Common myeloid progenitor, CD34-positive (primary cell): ENCODE measurements at regions of chr6 and their contacts with region 1.

Region 1: GRCh38 chr6:31087494-31088089 is 24.8 kb downstream of the C6orf15 start:
- DNase-seq: peak; percentile 87 to 91 (median 90)
- H3K4me3 ChIP-seq: peak overlapping the region in 1 of 7 experiments; percentile 26
- H3K27ac ChIP-seq: peak overlapping the region in 1 of 2 experiments; percentile 28
- H3K4me1 ChIP-seq: peaks cover 0 to 21% (median 14%) of the 10 kb centered on the region in 4 experiments
- H3K27me3 ChIP-seq: no peaks in the 10 kb centered on the region

Region 2: GRCh38 chr6:30821862-30822782 is 265.5 kb before region 1 on chr6:
- CTCF ChIA-PET with region 1: interaction called, 33 read pairs
- POLR2A ChIA-PET with region 1: no interaction called
- DNase-seq: peak; percentile 46 to 72 (median 61)
- H3K4me3 ChIP-seq: no peak overlapping the region
- H3K27ac ChIP-seq: no peak overlapping the region
- H3K4me1 ChIP-seq: no peaks in the 10 kb centered on the region
- H3K27me3 ChIP-seq: peaks cover 0 to 5% (median 0%) of the 10 kb centered on the region in 5 experiments

Region 3: GRCh38 chr6:30883685-30884520 is 203.7 kb before region 1 on chr6 and contains the start of gene DDR1:
- CTCF ChIA-PET with region 1: interaction called, 13 read pairs
- POLR2A ChIA-PET with region 1: no interaction called
- DNase-seq: peak in 2 of 3 donors; percentile 28 to 33
- H3K4me3 ChIP-seq: peak within 1 kb of the TSS; percentile 17 to 72 (median 43)
- H3K27ac ChIP-seq: peak within 1 kb of the TSS in 1 of 2 experiments; percentile 68
- H3K4me1 ChIP-seq: peaks cover 0 to 14% (median 10%) of the 10 kb centered on the region in 4 experiments
- H3K27me3 ChIP-seq: peaks cover 0 to 35% (median 18%) of the 10 kb centered on the region in 5 experiments

Region 4: GRCh38 chr6:31004285-31004684 is 83.3 kb before region 1 on chr6:
- CTCF ChIA-PET with region 1: no interaction called
- POLR2A ChIA-PET with region 1: no interaction called
- DNase-seq: no peak
- H3K4me3 ChIP-seq: no peak overlapping the region
- H3K27ac ChIP-seq: no peak overlapping the region
- H3K4me1 ChIP-seq: peaks cover 0 to 3% (median 0%) of the 10 kb centered on the region in 4 experiments
- H3K27me3 ChIP-seq: peaks cover 0 to 5% (median 0%) of the 10 kb centered on the region in 5 experiments

Region 5: GRCh38 chr6:31068669-31069340 is 18.8 kb before region 1 on chr6:
- CTCF ChIA-PET with region 1: interaction called, 13 read pairs
- POLR2A ChIA-PET with region 1: no interaction called
- DNase-seq: peak; percentile 70 to 85 (median 82)
- H3K4me3 ChIP-seq: no peak overlapping the region
- H3K27ac ChIP-seq: no peak overlapping the region
- H3K4me1 ChIP-seq: no peaks in the 10 kb centered on the region
- H3K27me3 ChIP-seq: peaks cover 0 to 2% (median 0%) of the 10 kb centered on the region in 5 experiments

Region 6: GRCh38 chr6:31114970-31115849 is 27.6 kb after region 1 on chr6:
- CTCF ChIA-PET with region 1: interaction called, 66 read pairs
- POLR2A ChIA-PET with region 1: no interaction called
- DNase-seq: peak; percentile 53 to 78 (median 78)
- H3K4me3 ChIP-seq: no peak overlapping the region
- H3K27ac ChIP-seq: no peak overlapping the region
- H3K4me1 ChIP-seq: peaks cover 0 to 10% (median 7%) of the 10 kb centered on the region in 4 experiments
- H3K27me3 ChIP-seq: peaks cover 0 to 2% (median 0%) of the 10 kb centered on the region in 5 experiments